ENCODE measurements at regions of chr21 and their contacts with region 1.

Region 1: DNA sequence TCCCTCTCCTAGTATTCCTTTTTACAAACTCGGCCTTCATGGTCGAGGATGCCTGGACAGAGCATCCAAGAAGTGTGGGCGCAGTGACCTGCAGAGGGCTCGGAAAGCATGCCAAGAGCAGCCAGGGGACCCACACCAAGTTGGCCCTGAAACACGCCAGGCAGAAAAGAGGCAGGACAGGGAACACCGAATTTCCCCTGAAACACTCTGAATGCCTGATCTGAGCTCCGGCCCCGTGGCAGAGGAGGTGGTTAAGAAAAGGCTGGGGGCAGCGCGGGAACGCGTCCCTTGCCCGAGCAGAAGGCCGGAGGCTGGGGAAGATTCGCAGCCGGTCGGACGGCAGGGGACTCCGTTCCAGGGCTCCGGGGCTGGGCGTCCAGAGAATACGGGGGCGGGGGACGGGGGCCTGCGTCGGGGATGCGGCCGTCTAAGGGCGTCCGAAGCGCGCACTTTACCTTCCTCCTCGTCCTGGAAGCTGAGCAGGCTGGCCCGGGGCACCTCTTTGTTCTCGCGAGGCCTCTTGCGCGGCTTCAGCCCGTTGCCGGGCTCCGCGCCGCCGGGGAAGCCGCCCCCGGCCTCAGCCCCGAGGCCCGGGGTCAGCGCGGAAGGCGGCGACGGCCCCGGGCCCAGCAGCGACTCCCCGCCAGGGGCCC is 558 bp downstream of the PAXBP1 start:
- DNase-seq: peak; percentile 53
- H3K4me3 ChIP-seq: peak overlapping the region; percentile 46 to 92 (median 78)
- H3K27ac ChIP-seq: peak overlapping the region; percentile 78
- H3K4me1 ChIP-seq: peaks cover 28% of the 10 kb centered on the region
- H3K27me3 ChIP-seq: no peaks in the 10 kb centered on the region
- CTCF ChIP-seq: no peak
- POLR2A ChIP-seq: no peak

Region 2: GRCh38 chr21:32612075-32612998 is 158.7 kb before region 1 on chr21 and contains the start of gene CFAP298:
- CTCF ChIA-PET with region 1: no interaction called
- POLR2A ChIA-PET with region 1: no interaction called
- dilution Hi-C with region 1: no loop called
- intact Hi-C with region 1: loop called (anchors 1 kb)
- DNase-seq: peak; percentile 92
- H3K4me3 ChIP-seq: peak within 1 kb of the TSS; percentile 74 to 99 (median 95)
- H3K27ac ChIP-seq: peak within 1 kb of the TSS; percentile 79
- H3K4me1 ChIP-seq: peaks cover 10% of the 10 kb centered on the region
- H3K27me3 ChIP-seq: no peaks in the 10 kb centered on the region
- CTCF ChIP-seq: no peak
- POLR2A ChIP-seq: peak; percentile 91
- total RNA-seq, gene CFAP298: 36.0 and 44.1 TPM in 2 replicates

Region 3: GRCh38 chr21:32687643-32688345 is 83.2 kb before region 1 on chr21:
- CTCF ChIA-PET with region 1: no interaction called
- POLR2A ChIA-PET with region 1: no interaction called
- dilution Hi-C with region 1: no loop called
- intact Hi-C with region 1: loop called (anchors 1 kb)
- DNase-seq: peak; percentile 69
- H3K4me3 ChIP-seq: no peak overlapping the region
- H3K27ac ChIP-seq: no peak overlapping the region
- H3K4me1 ChIP-seq: peaks cover 7% of the 10 kb centered on the region
- H3K27me3 ChIP-seq: no peaks in the 10 kb centered on the region
- CTCF ChIP-seq: no peak
- POLR2A ChIP-seq: no peak

Region 4: DNA sequence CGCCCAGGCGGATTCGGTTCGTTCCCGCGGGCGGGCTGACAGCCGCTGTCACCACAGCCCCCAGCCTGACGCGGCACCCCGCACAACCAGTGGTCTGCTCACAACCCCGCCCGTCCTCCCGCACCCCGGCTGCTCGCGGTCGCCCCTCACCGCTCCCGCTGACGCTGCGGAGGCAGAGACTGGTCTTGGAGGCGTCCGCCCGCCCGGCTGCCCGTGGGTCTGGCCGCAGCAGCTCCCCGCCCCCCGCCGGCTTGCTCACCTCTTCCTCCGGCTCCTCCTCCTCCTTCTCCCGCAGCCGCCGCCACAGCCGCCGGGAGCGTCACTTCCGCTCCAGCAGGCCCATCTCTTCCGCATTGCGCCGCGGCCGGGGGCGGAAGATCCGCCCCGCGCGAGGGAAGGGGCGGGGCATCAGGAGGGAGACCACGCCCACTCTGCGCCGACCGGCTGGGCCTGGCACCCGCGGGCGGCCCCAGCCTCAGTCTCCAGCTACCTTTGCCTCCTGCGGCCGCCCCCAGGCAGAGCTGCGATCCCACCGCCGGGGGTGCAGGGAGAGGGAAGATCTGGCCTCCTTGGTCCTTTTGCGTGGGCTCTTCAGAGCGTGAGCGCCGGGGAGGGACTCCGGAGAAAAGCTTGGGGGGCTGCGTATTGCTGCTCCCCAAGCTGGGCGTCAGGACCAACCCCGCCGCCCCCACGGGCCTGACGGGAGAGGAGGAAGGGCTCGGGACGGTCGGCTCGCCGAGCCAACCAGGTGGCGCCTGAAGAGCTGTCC is 43.1 kb before region 1 on chr21 and contains the start of gene SYNJ1:
- CTCF ChIA-PET with region 1: interaction called, 19 read pairs
- POLR2A ChIA-PET with region 1: no interaction called
- dilution Hi-C with region 1: no loop called
- intact Hi-C with region 1: loop called (anchors 1 kb)
- DNase-seq: peak; percentile 98
- H3K4me3 ChIP-seq: peak within 1 kb of the TSS; percentile 45 to 87 (median 85)
- H3K27ac ChIP-seq: peak within 1 kb of the TSS; percentile 50
- H3K4me1 ChIP-seq: peaks cover 13% of the 10 kb centered on the region
- H3K27me3 ChIP-seq: no peaks in the 10 kb centered on the region
- CTCF ChIP-seq: no peak
- POLR2A ChIP-seq: peak; percentile 75
- total RNA-seq, gene SYNJ1: 17.0 and 18.3 TPM in 2 replicates

Region 5: DNA sequence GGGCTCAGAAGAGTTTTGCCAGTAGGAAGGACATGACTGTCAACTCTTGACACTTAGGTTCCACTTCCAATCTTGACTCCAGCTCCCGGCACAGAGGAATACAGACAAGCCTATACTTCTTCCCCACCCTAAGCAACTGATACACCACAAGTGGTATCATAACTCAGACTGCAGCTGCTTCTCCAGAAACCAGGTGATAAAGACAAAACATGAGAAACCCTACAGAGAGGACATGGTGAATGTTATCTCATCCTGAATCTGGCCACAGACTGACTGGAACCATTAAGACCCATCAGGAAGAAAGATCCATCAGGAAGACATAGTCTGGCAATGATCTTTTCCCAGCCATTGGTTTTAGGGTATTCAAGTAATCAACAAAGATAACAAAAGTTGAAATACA is 13.2 kb before region 1 on chr21:
- CTCF ChIA-PET with region 1: interaction called, 13 read pairs
- POLR2A ChIA-PET with region 1: no interaction called
- dilution Hi-C with region 1: no loop called
- intact Hi-C with region 1: no loop called
- DNase-seq: no peak
- H3K4me3 ChIP-seq: no peak overlapping the region
- H3K27ac ChIP-seq: no peak overlapping the region
- H3K4me1 ChIP-seq: no peaks in the 10 kb centered on the region
- H3K27me3 ChIP-seq: no peaks in the 10 kb centered on the region
- CTCF ChIP-seq: no peak
- POLR2A ChIP-seq: no peak

Region 6: DNA sequence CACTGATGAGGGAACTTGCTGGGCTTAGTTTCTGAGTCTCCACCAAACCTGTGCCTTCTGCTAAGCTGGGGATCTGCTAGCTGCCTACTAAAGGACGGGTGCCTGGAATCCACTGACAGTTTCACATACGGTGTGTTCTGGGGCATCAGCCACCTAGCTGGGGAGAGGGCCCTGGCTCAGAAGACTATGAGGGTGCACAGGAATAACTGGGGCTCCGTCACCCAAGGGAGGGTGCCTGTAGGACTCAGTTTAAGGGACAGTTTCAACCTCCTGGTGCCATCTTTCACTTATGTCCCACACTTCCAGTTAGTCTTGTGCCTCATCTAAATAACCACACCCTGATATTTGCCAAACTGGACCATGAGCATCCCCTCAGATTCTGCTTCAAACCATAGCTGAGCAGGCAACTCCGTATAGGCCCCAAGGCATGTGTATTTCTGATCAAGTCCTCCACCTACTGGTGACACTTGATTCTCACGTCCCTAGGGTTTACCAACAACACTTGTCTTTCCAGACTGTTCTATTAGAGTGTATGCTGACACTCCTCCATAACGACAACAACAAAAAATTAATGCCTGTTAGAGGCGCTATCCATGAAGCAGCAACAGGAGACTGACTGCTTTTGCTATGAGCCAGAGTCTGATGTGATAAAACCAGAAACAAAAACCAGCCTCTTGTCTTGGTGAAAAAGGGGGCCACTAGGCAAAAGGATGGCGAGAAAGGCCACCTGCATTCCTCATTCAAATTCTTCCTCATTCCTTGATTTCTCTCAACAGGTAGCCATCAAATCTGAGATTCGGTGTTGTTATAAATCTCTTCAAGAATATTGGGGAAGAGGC is 55.6 kb after region 1 on chr21:
- CTCF ChIA-PET with region 1: interaction called, 21 read pairs
- POLR2A ChIA-PET with region 1: no interaction called
- dilution Hi-C with region 1: no loop called
- intact Hi-C with region 1: loop called (anchors 2 kb)
- DNase-seq: peak; percentile 64
- H3K4me3 ChIP-seq: no peak overlapping the region
- H3K27ac ChIP-seq: no peak overlapping the region
- H3K4me1 ChIP-seq: no peaks in the 10 kb centered on the region
- H3K27me3 ChIP-seq: peaks cover 3% of the 10 kb centered on the region in 2 experiments
- CTCF ChIP-seq: peak; percentile 48 to 55
- POLR2A ChIP-seq: no peak

Region 7: DNA sequence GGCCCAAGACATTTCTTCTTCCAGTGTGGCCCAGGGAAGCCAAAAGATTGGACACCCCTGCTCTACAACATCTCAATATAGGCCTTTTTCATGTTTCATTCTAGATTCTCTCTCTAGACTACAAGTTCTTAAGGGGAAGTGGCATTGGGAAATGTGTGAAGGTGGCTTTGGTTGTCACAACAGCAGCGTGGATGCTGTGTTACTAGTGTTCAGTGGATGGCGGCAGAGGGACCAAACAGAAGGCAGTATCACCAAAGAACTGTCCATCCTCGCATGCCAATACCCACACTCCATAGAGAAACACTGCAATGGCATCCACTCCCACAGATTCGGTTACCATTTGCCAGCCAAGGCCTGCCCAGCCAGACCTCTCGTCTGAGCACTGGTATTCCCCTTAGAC is 434.5 kb after region 1 on chr21:
- CTCF ChIA-PET with region 1: no interaction called
- POLR2A ChIA-PET with region 1: no interaction called
- dilution Hi-C with region 1: no loop called
- intact Hi-C with region 1: no loop called
- DNase-seq: no peak
- H3K4me3 ChIP-seq: no peak overlapping the region
- H3K27ac ChIP-seq: no peak overlapping the region
- H3K4me1 ChIP-seq: no peaks in the 10 kb centered on the region
- H3K27me3 ChIP-seq: no peaks in the 10 kb centered on the region
- CTCF ChIP-seq: no peak
- POLR2A ChIP-seq: no peak

Measured in endothelial cell of umbilical vein (primary cell).